A549 (cell line): ENCODE measurements at regions of chr14 and their contacts with region 1.

Region 1: DNA sequence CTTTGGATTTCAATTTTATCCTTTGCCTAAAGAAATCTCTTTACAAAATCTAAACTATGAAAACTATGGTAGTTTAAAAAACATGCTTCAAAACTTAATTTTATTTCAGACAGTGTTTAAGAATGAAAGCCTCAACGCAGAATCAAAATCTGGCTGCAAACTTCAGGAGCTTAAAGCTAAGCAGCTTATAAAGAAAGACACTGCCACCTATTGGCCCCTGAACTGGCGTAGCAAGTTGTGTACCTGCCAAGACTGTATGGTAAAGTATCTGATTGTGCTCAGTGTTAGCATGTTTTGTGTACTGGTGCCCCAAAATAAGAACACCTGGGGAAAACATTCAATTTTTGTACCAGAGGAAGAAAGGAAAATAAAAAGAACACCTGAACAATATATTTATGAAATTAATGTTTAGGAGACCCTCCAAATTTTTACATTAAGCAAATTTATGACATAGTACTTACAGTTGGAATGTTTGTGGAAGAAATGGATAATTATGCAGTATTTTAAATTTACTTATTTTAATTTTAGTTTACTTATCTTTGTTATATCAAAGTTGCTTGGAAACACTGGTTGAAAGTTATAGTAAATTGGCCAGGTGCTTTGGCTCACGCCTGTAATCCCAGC is 12.2 kb downstream of the UBR7 start:
- DNase-seq: peak; percentile 54 to 80
- ATAC-seq: peak; percentile 94 to 95
- H3K4me3 ChIP-seq: no peak overlapping the region
- H3K27ac ChIP-seq: no peak overlapping the region
- H3K4me1 ChIP-seq: no peaks in the 10 kb centered on the region
- CTCF ChIP-seq: peak; percentile 72
- EP300 ChIP-seq: no peak
- POLR2A ChIP-seq: no peak
- RAD21 ChIP-seq: peak; percentile 68 to 72

Region 2: DNA sequence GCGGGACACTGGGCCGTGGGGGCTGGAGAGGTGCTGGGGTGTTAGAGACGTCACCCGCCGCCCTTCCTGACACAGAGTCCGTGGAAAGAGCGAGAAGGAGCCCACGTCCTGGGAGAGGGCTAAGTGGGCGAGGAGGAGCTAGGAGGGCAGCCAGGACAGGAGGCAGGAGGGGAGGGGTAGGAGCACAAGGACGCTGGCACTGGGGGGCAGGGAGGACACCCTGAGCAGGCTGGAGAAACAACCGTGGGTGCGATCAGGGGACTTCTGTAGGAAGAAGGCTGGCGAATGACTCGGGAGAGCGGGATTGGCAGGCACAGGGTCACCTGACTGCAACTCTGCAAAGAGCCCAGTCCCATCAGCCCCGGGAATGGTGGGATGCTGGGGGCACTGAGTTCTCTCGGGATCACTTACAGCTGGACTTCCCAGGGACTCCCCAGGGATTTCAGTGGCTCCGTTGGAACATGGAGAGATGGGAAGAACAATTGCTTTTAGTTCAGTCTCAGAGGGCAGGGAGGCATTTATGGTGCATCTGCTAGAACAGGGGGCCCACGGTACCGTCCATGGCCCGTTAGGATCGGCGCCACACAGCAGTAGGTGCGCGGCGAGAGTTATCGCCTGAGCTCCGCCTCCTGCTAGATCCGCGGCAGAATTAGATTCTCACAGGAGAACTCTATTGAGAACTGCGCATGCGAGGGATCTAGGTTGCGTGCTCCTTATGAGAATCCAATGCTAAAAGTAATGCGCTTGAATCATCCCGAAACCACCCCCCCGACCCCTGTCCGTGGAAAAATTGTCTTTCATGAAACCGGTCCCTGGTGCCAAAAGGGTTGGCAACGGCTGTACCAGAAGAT is 12.1 kb after region 1 on chr14:
- CTCF ChIA-PET with region 1: interaction called, 13 read pairs
- POLR2A ChIA-PET with region 1: no interaction called
- DNase-seq: peak; percentile 51 to 78
- ATAC-seq: peak; percentile 78 to 84
- H3K4me3 ChIP-seq: peak overlapping the region; percentile 57
- H3K27ac ChIP-seq: peak overlapping the region; percentile 70 to 80
- H3K4me1 ChIP-seq: peaks cover 9% of the 10 kb centered on the region; the same call in 1 of the 3 replicates
- CTCF ChIP-seq: no peak
- EP300 ChIP-seq: no peak
- POLR2A ChIP-seq: 0 out of 2 replicates have a peak, but pooled peaks have one; percentile 18
- RAD21 ChIP-seq: no peak